ENCODE measurements at regions of chr22 and their contacts with region 1.

Region 1: DNA sequence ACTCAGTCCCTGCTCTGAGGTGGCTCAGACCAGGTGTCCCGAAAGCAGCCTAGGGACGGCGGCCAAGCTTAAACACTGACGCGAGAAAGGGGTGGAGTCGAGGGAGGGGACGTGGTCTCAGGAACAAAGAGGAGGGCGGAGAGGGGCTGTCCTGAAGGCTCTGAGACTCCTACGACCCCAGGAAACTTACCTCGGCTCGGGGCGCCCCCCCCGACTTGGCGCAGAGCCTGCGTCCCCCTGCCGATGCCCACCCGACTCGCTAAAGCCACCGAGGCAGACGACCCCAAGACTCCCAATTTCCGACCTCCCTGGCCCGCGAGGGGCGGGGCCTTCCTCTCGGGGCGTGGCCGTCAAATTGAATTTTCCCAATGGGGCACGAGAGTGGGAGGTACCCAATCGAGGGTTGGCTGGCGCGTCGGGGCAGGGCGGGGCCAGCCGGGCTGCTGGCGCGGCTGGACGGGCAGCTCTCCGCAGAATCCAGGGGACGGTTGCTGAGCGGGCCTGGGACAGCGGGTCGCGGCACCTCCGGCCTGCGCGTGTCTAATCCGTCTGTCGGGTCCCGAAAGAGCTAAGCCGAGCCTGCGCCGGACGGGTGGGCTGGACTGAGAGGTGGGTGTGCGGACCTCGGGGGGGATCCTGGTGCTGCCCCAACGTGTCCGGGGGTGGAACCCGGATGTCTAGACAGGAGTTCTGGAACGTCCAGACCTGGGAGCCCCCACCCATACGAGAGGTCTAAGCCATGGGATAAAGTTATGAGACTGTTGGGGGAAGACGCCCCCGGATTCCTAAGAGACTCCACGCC is at the start of gene SMTN:
- DNase-seq: peak; percentile 97
- total RNA-seq, gene SMTN: 511 to 666 TPM

Region 2: DNA sequence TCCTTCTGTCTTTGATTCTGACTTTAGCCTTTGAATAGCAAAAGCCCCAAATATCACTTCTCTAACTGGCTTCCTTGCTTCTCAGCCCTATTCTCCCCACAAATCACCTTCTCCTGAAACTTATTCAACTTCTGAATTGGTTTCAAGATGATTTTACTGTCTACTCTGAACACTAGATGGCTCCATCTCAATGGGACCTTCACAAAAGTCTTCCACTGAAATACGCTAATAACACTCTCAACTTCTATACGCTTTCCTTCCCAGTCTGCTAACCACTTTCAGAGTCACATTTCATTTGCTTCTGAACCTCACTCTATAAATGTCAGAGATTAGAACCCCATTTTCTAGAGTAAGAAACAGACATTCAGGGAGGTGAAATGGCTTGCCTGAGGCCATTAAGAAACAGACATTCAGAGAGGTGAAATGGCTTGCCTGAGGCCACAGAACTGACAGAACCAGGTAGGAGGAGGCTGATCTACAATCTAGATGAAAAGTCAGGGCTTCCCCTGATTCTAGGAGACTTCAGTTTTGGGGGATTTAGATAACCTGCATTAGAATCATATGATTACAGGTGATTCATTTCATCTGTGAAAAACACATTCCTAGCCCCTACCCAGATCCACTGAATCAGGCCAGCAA is 133.1 kb before region 1 on chr22:
- intact Hi-C with region 1: loop called (anchors 2 to 5 kb)
- DNase-seq: no peak

Region 3: DNA sequence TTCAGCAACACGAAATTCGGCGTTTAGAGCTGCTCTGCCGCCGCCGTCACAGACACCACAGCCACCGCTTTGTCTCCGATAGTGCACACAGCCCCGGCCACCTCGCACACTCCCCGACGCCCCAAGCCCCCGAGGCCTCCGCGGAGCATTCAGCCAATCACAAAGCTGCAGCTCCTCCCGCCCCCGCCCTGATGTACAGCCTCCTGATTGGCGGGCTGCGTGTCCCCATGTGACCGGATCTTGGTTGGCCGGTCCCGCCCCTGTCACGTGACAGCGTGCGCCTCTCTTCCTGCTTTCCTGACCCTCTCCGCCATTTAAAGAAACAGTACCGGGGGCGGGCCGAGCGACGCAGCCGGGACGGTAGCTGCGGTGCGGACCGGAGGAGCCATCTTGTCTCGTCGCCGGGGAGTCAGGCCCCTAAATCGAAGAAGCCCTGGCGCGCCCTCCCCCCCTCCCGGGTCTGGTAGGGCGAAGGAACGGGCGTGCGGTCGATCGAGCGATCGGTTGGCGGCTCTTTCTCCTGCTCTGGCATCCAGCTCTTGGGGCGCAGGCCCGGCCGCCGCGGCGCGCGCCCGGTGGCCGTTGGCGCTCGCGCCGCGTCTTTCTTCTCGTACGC is 112.0 kb before region 1 on chr22 and contains the start of gene TUG1:
- intact Hi-C with region 1: loop called (anchors 2 to 5 kb)
- DNase-seq: peak; percentile 99
- total RNA-seq, gene TUG1: 61.7 to 65.8 TPM

Region 4: GRCh38 chr22:31036671-31037550 is 44.1 kb before region 1 on chr22:
- intact Hi-C with region 1: loop called in 1 of 2 experiments (anchors 5 kb)
- DNase-seq: peak; percentile 82

Region 5: GRCh38 chr22:31574055-31574670 is 493.1 kb after region 1 on chr22:
- intact Hi-C with region 1: no loop called
- DNase-seq: no peak